ENCODE measurements at regions of chr4 and their contacts with region 1.

Region 1: GRCh38 chr4:8468746-8469535 is 28.4 kb downstream of the TRMT44 start:
- DNase-seq: peak; percentile 16
- ATAC-seq: peak; percentile 84
- H3K4me3 ChIP-seq: no peak overlapping the region
- H3K27ac ChIP-seq: no peak overlapping the region
- H3K4me1 ChIP-seq: no peaks in the 10 kb centered on the region
- H3K27me3 ChIP-seq: no peaks in the 10 kb centered on the region
- CTCF ChIP-seq: peak; percentile 88
- EP300 ChIP-seq: no peak
- POLR2A ChIP-seq: no peak
- RAD21 ChIP-seq: peak; percentile 66

Region 2: DNA sequence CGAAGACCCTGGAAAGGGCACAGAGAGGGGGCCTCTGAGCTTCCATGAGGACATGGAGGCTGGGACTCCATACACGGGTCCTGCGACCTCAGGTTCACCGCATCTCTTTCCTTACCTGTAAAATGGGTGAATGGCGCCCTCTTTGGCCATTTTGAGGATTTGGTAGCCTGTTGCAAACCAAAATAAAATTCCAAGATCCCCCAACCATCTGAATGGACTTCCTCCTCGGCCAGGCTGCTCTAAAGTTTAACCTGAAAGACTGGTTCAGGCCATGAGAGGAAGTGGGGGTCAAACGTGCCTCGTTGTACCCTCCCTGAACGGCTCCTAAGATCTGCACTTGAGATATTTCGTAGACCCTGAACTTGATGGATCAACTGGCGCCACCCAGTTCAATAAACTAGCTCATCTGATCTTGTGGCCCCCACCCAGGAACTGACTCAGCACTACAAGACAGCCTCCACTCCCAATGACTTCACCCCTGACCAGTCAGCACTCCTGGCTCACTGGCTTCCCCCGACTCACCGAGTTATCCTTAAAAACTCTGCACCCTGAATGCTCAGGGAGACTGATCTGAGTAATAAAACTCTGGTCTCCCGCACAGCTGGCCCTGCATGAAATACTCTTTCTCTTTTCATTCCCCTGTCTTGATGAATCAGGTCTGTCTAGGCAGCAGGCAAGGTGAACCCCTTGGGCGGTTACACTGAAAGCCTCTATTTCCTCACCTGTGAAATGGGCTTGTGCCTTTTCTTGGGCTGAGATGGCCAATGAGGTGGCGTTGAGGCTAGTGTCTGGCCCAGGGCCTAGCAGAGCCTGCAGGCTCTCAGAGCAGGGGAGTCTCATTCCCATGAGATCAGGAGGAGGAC is 78.4 kb after region 1 on chr4:
- CTCF ChIA-PET with region 1: interaction called, 11 read pairs
- POLR2A ChIA-PET with region 1: no interaction called
- in situ Hi-C with region 1: loop called (anchors 10 kb)
- intact Hi-C with region 1: no loop called
- DNase-seq: peak; percentile 12
- ATAC-seq: peak; percentile 49; the same call in 2 of the 3 replicates
- H3K4me3 ChIP-seq: no peak overlapping the region
- H3K27ac ChIP-seq: no peak overlapping the region
- H3K4me1 ChIP-seq: no peaks in the 10 kb centered on the region
- H3K27me3 ChIP-seq: peaks cover 2 to 43% of the 10 kb centered on the region in 2 experiments
- CTCF ChIP-seq: 0 out of 2 replicates have a peak, but pooled peaks have one; percentile 25
- EP300 ChIP-seq: no peak
- POLR2A ChIP-seq: no peak
- RAD21 ChIP-seq: no peak

Region 3: DNA sequence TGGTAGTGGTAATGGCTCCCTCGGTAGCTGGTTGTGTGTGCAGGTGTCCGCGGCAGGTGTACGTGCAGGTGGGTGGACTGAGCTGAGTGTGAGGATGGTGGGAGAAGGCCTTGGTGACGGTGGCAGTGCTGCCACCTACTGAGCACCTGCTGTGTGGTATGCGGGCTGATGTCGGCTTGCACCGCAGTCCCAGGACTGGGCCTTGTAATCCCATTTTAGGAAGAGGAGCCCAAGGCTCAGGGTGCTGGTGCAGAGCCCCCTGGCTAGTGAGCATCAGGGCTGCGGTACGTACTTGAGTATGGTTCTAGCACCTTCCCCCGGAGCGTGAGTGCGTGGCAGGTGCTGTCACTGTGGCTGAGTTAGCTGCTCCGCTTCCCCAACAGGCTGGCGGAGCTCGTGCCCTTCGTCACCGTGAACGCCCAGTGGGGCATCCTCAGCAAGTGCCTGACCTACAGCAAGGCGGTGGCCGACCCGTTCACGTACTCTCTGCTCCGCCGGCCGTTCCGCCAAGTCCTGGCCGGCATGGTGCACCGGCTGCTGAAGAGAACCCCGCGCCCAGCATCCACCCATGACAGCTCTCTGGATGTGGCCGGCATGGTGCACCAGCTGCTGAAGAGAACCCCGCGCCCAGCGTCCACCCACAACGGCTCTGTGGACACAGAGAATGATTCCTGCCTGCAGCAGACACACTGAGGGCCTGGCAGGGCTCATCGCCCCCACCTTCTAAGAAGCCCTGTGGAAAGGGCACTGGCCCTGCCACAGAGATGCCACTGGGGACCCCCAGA is 117.9 kb after region 1 on chr4:
- CTCF ChIA-PET with region 1: interaction called, 4 read pairs
- POLR2A ChIA-PET with region 1: no interaction called
- in situ Hi-C with region 1: loop called (anchors 5 kb)
- intact Hi-C with region 1: loop called (anchors 2 kb)
- DNase-seq: no peak
- ATAC-seq: peak; percentile 86
- H3K4me3 ChIP-seq: no peak overlapping the region
- H3K27ac ChIP-seq: no peak overlapping the region
- H3K4me1 ChIP-seq: no peaks in the 10 kb centered on the region
- H3K27me3 ChIP-seq: peaks cover 11 to 45% of the 10 kb centered on the region in 2 experiments; a peak in 4 of 5 replicates
- CTCF ChIP-seq: peak; percentile 64
- EP300 ChIP-seq: no peak
- POLR2A ChIP-seq: no peak
- RAD21 ChIP-seq: no peak

Region 4: GRCh38 chr4:8594097-8595038 is 125.4 kb after region 1 on chr4:
- CTCF ChIA-PET with region 1: interaction called, 19 read pairs
- POLR2A ChIA-PET with region 1: no interaction called
- in situ Hi-C with region 1: loop called (anchors 5 kb)
- intact Hi-C with region 1: loop called (anchors 1 kb)
- DNase-seq: peak; percentile 75
- ATAC-seq: peak; percentile 69
- H3K4me3 ChIP-seq: no peak overlapping the region
- H3K27ac ChIP-seq: no peak overlapping the region
- H3K4me1 ChIP-seq: peaks cover 23% of the 10 kb centered on the region
- H3K27me3 ChIP-seq: peaks cover 12 to 53% of the 10 kb centered on the region in 2 experiments
- CTCF ChIP-seq: peak; percentile 76
- EP300 ChIP-seq: no peak
- POLR2A ChIP-seq: no peak
- RAD21 ChIP-seq: peak; percentile 64